ENCODE measurements at regions of chr1 and their contacts with region 1.

Region 1: DNA sequence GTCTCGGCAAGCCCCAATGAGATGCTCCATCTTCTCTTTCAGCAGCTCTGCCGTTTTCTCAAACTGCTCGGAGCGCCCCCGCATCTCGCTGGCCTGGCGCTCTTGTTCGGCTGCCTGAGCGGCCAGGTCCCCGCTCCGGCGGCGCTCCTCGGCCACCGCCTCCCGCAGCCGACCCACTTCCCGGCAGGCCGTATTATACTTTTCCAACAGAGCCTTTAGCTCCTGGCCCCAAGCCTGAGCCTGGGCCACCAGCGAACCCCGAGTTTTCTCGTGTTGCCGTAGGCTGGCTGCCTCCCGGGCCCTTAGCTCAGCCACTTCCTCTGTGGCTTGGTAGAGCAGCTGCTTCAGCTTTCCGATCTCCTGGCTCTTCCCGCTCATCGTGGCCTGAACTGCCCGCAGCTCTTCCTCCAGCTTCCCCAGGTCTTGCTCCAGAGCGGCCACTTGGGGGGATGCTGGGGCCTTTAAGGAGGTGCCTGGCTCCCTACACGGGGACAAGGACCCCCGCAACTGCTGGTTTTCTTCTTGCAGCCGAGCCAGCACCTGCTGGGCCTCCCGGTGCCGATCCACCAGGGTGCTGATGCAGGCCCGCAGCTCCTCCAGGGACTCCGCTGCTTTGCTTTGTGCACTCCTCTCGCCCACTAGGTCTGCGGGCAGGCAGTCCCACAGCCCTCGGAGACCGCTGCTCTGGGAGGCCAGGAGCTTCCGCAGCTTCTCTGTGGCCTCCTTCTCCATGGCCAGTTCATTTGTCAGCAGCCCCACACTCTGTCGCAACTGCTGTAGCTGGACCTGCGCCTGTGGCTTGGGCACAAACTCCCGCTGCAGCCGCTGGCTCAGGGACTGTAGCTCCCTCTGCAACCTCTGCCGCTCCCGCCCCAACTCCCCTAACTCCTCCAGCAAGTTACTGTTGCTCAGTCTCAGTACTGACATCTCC is 13.4 kb upstream of the PIAS3 start:
- DNase-seq: no peak
- H3K4me3 ChIP-seq: peak overlapping the region; percentile 35
- H3K27me3 ChIP-seq: no peaks in the 10 kb centered on the region
- CTCF ChIP-seq: no peak

Region 2: GRCh38 chr1:145858894-145859490 is 13.3 kb before region 1 on chr1 and contains the start of gene PIAS3:
- CTCF ChIA-PET with region 1: interaction called, 9 read pairs
- POLR2A ChIA-PET with region 1: interaction called, 11 read pairs
- DNase-seq: peak; percentile 65
- H3K4me3 ChIP-seq: peak within 1 kb of the TSS; percentile 90
- H3K27me3 ChIP-seq: no peaks in the 10 kb centered on the region
- CTCF ChIP-seq: no peak
- polyA plus RNA-seq, gene PIAS3: 30.0 and 38.0 TPM in 2 replicates

Region 3: GRCh38 chr1:145885738-145886287 is 13.6 kb after region 1 on chr1 and contains the start of gene ANKRD35:
- CTCF ChIA-PET with region 1: interaction called, 18 read pairs
- POLR2A ChIA-PET with region 1: no interaction called
- DNase-seq: no peak
- H3K4me3 ChIP-seq: peak within 1 kb of the TSS; percentile 64
- H3K27me3 ChIP-seq: peaks cover 3% of the 10 kb centered on the region; the same call in 1 of the 2 replicates
- CTCF ChIP-seq: no peak
- polyA plus RNA-seq, gene ANKRD35: 1.4 and 1.5 TPM in 2 replicates

Region 4: GRCh38 chr1:145898756-145899155 is 26.5 kb after region 1 on chr1:
- CTCF ChIA-PET with region 1: no interaction called
- POLR2A ChIA-PET with region 1: no interaction called
- DNase-seq: no peak
- H3K4me3 ChIP-seq: no peak overlapping the region
- H3K27me3 ChIP-seq: no peaks in the 10 kb centered on the region
- CTCF ChIP-seq: no peak

Region 5: DNA sequence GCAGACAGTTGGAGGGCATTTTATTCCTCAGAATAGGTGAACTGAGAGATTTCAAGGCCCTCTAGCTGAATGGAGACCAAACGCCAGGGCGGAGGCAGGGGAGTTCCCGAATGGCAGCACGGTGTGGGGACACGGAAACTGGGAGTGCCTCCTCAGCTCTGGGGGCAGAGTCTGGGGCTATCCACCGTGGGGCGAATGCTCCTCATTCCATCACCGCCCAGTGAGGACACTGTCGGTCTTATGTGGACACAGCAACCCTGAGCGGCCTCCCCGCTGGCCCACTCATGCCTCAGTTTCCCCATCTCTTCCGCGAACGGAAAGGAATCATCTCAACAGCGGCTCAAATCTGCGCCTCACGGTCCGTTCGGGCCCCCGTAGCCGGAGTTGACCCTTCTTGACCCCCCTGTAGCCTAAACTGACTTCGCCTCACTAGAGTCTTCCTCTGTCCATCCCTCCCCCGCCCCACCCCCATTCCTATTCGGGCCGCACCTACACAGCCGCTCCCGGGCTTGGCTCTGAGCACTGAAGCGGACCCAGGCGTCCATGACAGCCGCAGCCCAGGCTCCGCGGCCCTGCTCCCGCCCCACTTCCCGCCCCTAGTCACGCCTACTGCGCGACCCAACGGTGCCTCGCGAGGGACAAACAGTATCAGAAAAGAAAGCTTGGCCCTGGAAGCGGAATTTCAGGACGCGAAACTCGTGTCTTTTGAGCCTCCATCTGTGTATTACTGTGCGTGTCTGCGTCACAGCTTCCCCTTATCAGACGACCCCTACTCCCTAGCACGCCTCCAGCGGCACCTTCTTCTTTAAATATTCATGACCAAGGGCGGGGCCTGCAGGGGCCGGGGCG is 46.1 kb after region 1 on chr1 and contains the start of gene PEX11B:
- CTCF ChIA-PET with region 1: no interaction called
- POLR2A ChIA-PET with region 1: no interaction called
- DNase-seq: peak; percentile 43
- H3K4me3 ChIP-seq: peak within 1 kb of the TSS; percentile 61
- H3K27me3 ChIP-seq: no peaks in the 10 kb centered on the region
- CTCF ChIP-seq: no peak
- polyA plus RNA-seq, gene PEX11B: 34.9 and 46.4 TPM in 2 replicates

Measured in BJ (cell line).